H1 (cell line): ENCODE measurements at regions of chrX and their contacts with region 1.

Region 1: GRCh38 chrX:40329616-40330015 is 231.9 kb upstream of the BCOR start:
- DNase-seq: no peak
- H3K4me3 ChIP-seq: no peak overlapping the region
- H3K27ac ChIP-seq: no peak overlapping the region
- H3K4me1 ChIP-seq: peaks cover 0 to 4% (median under 1%) of the 10 kb centered on the region in 4 experiments; a peak in 1 of 7 replicates
- H3K27me3 ChIP-seq: no peaks in the 10 kb centered on the region
- CTCF ChIP-seq: no peak
- EP300 ChIP-seq: no peak
- POLR2A ChIP-seq: no peak
- RAD21 ChIP-seq: no peak

Region 2: GRCh38 chrX:40244980-40245379 is 84.6 kb before region 1 on chrX:
- CTCF ChIA-PET with region 1: no interaction called
- POLR2A ChIA-PET with region 1: no interaction called
- DNase-seq: no peak
- H3K4me3 ChIP-seq: no peak overlapping the region
- H3K27ac ChIP-seq: no peak overlapping the region
- H3K4me1 ChIP-seq: peaks cover 0 to 8% (median 3%) of the 10 kb centered on the region in 4 experiments; a peak in 3 of 7 replicates
- H3K27me3 ChIP-seq: no peaks in the 10 kb centered on the region
- CTCF ChIP-seq: peak in 2 of 3 experiments; percentile 27 to 32; a peak in 2 of 4 replicates
- EP300 ChIP-seq: no peak
- POLR2A ChIP-seq: no peak
- RAD21 ChIP-seq: 0 out of 4 replicates have a peak, but pooled peaks of 1 of the 2 experiments have one; percentile 7

Region 3: GRCh38 chrX:40298572-40299479 is 30.8 kb before region 1 on chrX:
- CTCF ChIA-PET with region 1: interaction called, 14 read pairs
- POLR2A ChIA-PET with region 1: no interaction called
- DNase-seq: peak in 1 of 2 experiments; percentile 52
- H3K4me3 ChIP-seq: no peak overlapping the region
- H3K27ac ChIP-seq: no peak overlapping the region
- H3K4me1 ChIP-seq: peaks cover 2 to 11% (median 3%) of the 10 kb centered on the region in 4 experiments; a peak in 4 of 7 replicates
- H3K27me3 ChIP-seq: no peaks in the 10 kb centered on the region; a peak in 1 of 7 replicates
- CTCF ChIP-seq: peak; percentile 5 to 43 (median 31)
- EP300 ChIP-seq: no peak
- POLR2A ChIP-seq: no peak
- RAD21 ChIP-seq: peak; percentile 55 to 62

Region 4: GRCh38 chrX:40418146-40418815 is 88.7 kb after region 1 on chrX:
- CTCF ChIA-PET with region 1: interaction called, 11 read pairs
- POLR2A ChIA-PET with region 1: no interaction called
- DNase-seq: no peak
- H3K4me3 ChIP-seq: no peak overlapping the region
- H3K27ac ChIP-seq: no peak overlapping the region
- H3K4me1 ChIP-seq: no peaks in the 10 kb centered on the region; a peak in 1 of 7 replicates
- H3K27me3 ChIP-seq: no peaks in the 10 kb centered on the region
- CTCF ChIP-seq: no peak
- EP300 ChIP-seq: no peak
- POLR2A ChIP-seq: no peak
- RAD21 ChIP-seq: no peak